ENCODE measurements at regions of chr6 and their contacts with region 1.

Region 1: GRCh38 chr6:3226848-3227362 is 548 bp downstream of the TUBB2B start:
- DNase-seq: peak in 8 of 35 experiments; percentile 17 to 36 (median 27)
- ATAC-seq: peak in 3 of 4 experiments; percentile 5 to 47 (median 14)
- H3K4me3 ChIP-seq: peak overlapping the region; percentile 10 to 59
- H3K4me3 Mint-ChIP-seq: peak overlapping the region; percentile 57 to 77 (median 71)
- H3K27ac ChIP-seq: no peak overlapping the region
- H3K27ac Mint-ChIP-seq: no peak overlapping the region
- H3K4me1 ChIP-seq: peaks cover 18 to 50% of the 10 kb centered on the region in 2 experiments
- H3K4me1 Mint-ChIP-seq: peaks cover 46 to 50% (median 47%) of the 10 kb centered on the region in 3 donors
- H3K27me3 ChIP-seq: peaks cover 20 to 59% of the 10 kb centered on the region in 2 experiments
- H3K27me3 Mint-ChIP-seq: peaks cover 54 to 60% of the 10 kb centered on the region in 2 donors

Region 2: DNA sequence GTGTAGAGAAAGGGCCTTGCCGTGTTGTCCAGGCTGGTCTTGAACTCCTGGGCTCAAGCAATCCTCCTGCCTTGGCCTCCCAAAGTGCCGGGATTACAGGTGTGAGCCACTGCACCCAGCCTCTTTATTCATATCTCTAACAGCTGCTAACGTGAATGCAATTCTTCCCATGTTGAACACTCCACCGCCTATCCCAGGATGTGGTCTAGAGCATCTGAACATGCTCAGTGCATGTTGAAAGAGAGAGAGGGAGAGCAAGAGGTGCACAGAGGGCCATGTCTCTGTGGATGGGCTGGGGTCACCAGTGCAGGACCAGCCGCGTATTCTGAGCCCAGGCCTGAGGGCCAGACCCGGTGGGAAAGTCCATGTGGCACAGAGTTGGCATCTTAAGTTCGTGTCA is 82.3 kb before region 1 on chr6:
- CTCF ChIA-PET with region 1: interaction called in 1 of 2 experiments, 3 read pairs
- POLR2A ChIA-PET with region 1: interaction called in 1 of 2 experiments, 13 read pairs
- DNase-seq: no peak
- ATAC-seq: no peak
- H3K4me3 ChIP-seq: no peak overlapping the region
- H3K4me3 Mint-ChIP-seq: no peak overlapping the region
- H3K27ac ChIP-seq: no peak overlapping the region
- H3K27ac Mint-ChIP-seq: no peak overlapping the region
- H3K4me1 ChIP-seq: no peaks in the 10 kb centered on the region
- H3K4me1 Mint-ChIP-seq: peaks cover 0 to 5% (median 0%) of the 10 kb centered on the region in 3 donors
- H3K27me3 ChIP-seq: no peaks in the 10 kb centered on the region
- H3K27me3 Mint-ChIP-seq: no peaks in the 10 kb centered on the region

Region 3: GRCh38 chr6:3162565-3163247 is 64.2 kb before region 1 on chr6:
- CTCF ChIA-PET with region 1: interaction called in 1 of 2 experiments, 10 read pairs
- POLR2A ChIA-PET with region 1: no interaction called
- DNase-seq: peak in 34 of 35 experiments; percentile 10 to 76 (median 34)
- ATAC-seq: peak; percentile 62 to 68 (median 64)
- H3K4me3 ChIP-seq: peak overlapping the region; percentile 78 to 85
- H3K4me3 Mint-ChIP-seq: peak overlapping the region; percentile 75 to 82 (median 75)
- H3K27ac ChIP-seq: peak overlapping the region; percentile 66
- H3K27ac Mint-ChIP-seq: peak overlapping the region; percentile 70 to 85
- H3K4me1 ChIP-seq: peaks cover 5 to 48% of the 10 kb centered on the region in 2 experiments
- H3K4me1 Mint-ChIP-seq: peaks cover 33 to 35% (median 34%) of the 10 kb centered on the region in 3 donors
- H3K27me3 ChIP-seq: peaks cover 0 to 8% of the 10 kb centered on the region in 2 experiments
- H3K27me3 Mint-ChIP-seq: peaks cover 4 to 5% of the 10 kb centered on the region in 2 donors